Activated B cell treated with CpG ODN at 0.5 μM for 24 hours (primary cell): ENCODE measurements at regions of chr20 and their contacts with region 1.

Region 1: GRCh38 chr20:10034717-10035571 is at the start of gene ANKEF1:
- DNase-seq: peak; percentile 73
- ATAC-seq: peak; percentile 97
- H3K4me3 Mint-ChIP-seq: peak within 1 kb of the TSS; percentile 75
- H3K27ac Mint-ChIP-seq: no peak within 1 kb of the TSS
- H3K4me1 Mint-ChIP-seq: peaks cover 6% of the 10 kb centered on the region
- H3K27me3 Mint-ChIP-seq: peaks cover 13% of the 10 kb centered on the region
- CTCF ChIP-seq: no peak
- total RNA-seq, gene ANKEF1: 2.0 and 2.6 TPM in 2 replicates

Region 2: GRCh38 chr20:10060226-10060625 is 25.3 kb after region 1 on chr20:
- CTCF ChIA-PET with region 1: no interaction called
- POLR2A ChIA-PET with region 1: no interaction called
- intact Hi-C with region 1: loop called (anchors 1 kb)
- DNase-seq: no peak
- ATAC-seq: peak; percentile 100
- H3K4me3 Mint-ChIP-seq: peak overlapping the region; percentile 6
- H3K27ac Mint-ChIP-seq: no peak overlapping the region
- H3K4me1 Mint-ChIP-seq: peaks cover 17% of the 10 kb centered on the region
- H3K27me3 Mint-ChIP-seq: peaks cover 38% of the 10 kb centered on the region
- CTCF ChIP-seq: no peak